ENCODE measurements at regions of chr2 and their contacts with region 1.

Region 1: GRCh38 chr2:160387558-160388262 is 105.9 kb downstream of the RBMS1 start:
- DNase-seq: no peak
- ATAC-seq: no peak
- H3K4me3 ChIP-seq: no peak overlapping the region
- H3K4me3 Mint-ChIP-seq: peak overlapping the region; percentile 89
- H3K27ac ChIP-seq: peak overlapping the region; percentile 20
- H3K27ac Mint-ChIP-seq: peak overlapping the region; percentile 86 to 87
- H3K4me1 ChIP-seq: peaks cover 65% of the 10 kb centered on the region
- H3K4me1 Mint-ChIP-seq: peaks cover 90 to 92% of the 10 kb centered on the region in 2 donors
- H3K27me3 ChIP-seq: no peaks in the 10 kb centered on the region
- H3K27me3 Mint-ChIP-seq: no peaks in the 10 kb centered on the region
- CTCF ChIP-seq: no peak

Region 2: DNA sequence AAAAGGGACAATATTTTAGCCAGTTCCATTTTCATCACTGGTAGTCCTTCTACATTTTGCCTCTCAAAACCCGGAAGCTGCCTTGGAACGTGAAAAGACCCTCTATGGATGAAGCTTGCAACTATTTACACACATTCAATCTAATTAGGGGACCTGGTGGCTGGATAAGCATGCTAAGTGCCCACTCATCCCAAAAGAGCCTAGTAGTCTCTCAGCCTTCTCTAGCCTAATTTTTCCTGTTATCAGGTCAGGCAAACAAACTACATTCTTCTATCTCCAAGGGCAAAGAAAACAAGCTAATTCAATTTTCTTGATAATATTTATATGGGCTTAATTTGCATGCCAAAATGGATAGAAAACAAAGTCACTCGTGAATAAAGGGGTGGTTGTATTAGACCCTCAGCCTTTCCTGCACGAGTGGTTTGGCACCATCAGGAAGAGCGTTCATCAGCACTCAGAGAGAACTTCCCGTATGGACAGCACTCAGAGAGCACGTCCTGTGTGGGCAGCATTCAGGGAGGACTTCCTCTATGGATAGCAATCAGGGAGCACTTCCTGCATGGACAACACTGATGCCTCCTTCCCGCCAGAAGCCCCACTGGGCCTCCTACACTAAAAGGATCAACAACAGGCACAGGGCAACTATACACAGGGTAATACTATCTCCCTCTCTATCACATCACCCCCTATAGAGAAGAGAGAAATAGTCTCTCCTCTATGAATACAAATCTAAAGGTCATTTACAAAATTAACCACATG is 16.3 kb before region 1 on chr2:
- intact Hi-C with region 1: loop called (anchors 2 kb)
- DNase-seq: no peak
- ATAC-seq: peak; percentile 17 to 28 (median 26)
- H3K4me3 ChIP-seq: no peak overlapping the region
- H3K4me3 Mint-ChIP-seq: peak overlapping the region; percentile 59
- H3K27ac ChIP-seq: no peak overlapping the region
- H3K27ac Mint-ChIP-seq: peak overlapping the region; percentile 72 to 86
- H3K4me1 ChIP-seq: peaks cover 60% of the 10 kb centered on the region
- H3K4me1 Mint-ChIP-seq: peaks cover 79 to 88% of the 10 kb centered on the region in 2 donors
- H3K27me3 ChIP-seq: no peaks in the 10 kb centered on the region
- H3K27me3 Mint-ChIP-seq: no peaks in the 10 kb centered on the region
- CTCF ChIP-seq: no peak

Region 3: DNA sequence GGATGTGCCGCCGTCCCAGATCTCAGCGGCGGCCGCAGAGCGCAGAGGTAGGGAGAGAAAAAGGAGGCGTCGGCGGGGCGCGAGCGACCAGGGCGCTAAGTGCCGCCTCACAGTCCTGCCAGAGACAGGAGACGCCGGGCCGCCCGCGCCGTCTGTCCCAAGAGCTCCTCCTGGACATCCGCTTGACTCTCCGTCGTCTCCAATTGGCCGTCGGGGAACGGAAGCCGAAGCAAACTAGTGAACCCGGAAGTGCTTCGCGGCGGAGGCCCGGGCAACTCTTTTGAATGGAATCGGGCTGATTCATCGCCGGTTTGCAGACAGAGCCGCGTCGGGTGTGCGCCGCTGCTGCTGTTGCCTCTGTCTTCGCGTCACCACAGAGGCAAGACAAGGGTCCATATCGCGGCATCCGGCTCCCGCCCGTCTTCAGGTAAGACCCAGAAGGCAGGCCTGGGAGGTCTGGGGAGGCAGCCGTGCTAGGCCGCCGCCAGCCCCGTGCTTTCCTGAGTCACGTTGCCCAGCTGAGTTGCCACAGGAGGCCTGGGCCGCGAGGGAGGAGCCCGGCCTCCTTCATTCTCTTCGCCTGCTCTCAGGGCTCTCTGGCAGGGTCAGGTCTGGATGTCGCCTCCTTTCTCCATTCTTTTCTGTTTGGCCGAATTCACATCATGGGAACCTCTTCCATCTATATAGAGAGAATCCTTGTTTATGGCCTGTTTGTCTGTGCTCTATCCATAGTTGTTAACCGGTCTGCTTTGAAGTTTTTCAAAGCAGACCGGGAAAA is 920.7 kb after region 1 on chr2 and contains the start of gene PSMD14:
- intact Hi-C with region 1: no loop called
- DNase-seq: peak; percentile 84 to 93
- ATAC-seq: peak; percentile 91 to 95 (median 93)
- H3K4me3 ChIP-seq: peak within 1 kb of the TSS; percentile 77
- H3K4me3 Mint-ChIP-seq: peak within 1 kb of the TSS; percentile 95
- H3K27ac ChIP-seq: peak within 1 kb of the TSS; percentile 81
- H3K27ac Mint-ChIP-seq: peak within 1 kb of the TSS; percentile 94 to 97
- H3K4me1 ChIP-seq: peaks cover 5% of the 10 kb centered on the region
- H3K4me1 Mint-ChIP-seq: peaks cover 33 to 37% of the 10 kb centered on the region in 2 donors
- H3K27me3 ChIP-seq: no peaks in the 10 kb centered on the region
- H3K27me3 Mint-ChIP-seq: peaks cover 0 to 6% of the 10 kb centered on the region in 2 donors
- CTCF ChIP-seq: no peak
- total RNA-seq, gene PSMD14: 34.2 to 40.9 (median 36.2) TPM

Measured in natural killer cell (primary cell).